ENCODE measurements at regions of chr11 and their contacts with region 1.

Region 1: GRCh38 chr11:69101115-69101791 is 52.5 kb downstream of the TPCN2 start:
- DNase-seq: peak; percentile 20
- ATAC-seq: peak; percentile 92
- H3K4me3 ChIP-seq: no peak overlapping the region
- H3K27ac ChIP-seq: no peak overlapping the region
- H3K4me1 ChIP-seq: no peaks in the 10 kb centered on the region; the same call in 1 of the 2 replicates
- H3K27me3 ChIP-seq: no peaks in the 10 kb centered on the region
- CTCF ChIP-seq: peak; percentile 96 to 100 (median 99)
- EP300 ChIP-seq: no peak
- POLR2A ChIP-seq: no peak
- RAD21 ChIP-seq: peak; percentile 98

Region 2: DNA sequence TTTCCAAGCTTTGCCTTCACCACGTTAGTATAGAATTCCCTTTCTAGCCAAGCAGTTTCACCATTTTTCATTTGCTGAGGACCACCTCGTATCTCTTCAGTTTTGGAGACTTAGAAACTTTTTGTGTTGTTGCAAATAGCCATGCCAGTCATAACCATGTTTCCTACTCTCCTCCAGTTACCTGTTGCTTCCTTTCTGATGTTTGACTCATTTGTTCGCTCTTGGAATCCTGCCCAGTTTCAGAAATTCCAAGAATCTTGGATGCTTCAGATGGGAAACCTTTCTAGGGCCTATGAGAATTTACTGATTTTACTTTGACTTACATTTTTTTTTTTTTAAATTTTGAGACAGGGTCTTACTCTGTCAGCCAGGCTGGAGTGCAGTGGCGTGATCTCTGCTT is 575.3 kb before region 1 on chr11:
- CTCF ChIA-PET with region 1: no interaction called
- POLR2A ChIA-PET with region 1: no interaction called
- RAD21 ChIA-PET with region 1: no interaction called
- SMC1A ChIA-PET with region 1: no interaction called
- in situ Hi-C with region 1: no loop called
- intact Hi-C with region 1: no loop called
- DNase-seq: no peak
- ATAC-seq: no peak
- H3K4me3 ChIP-seq: no peak overlapping the region
- H3K27ac ChIP-seq: no peak overlapping the region
- H3K4me1 ChIP-seq: no peaks in the 10 kb centered on the region; the same call in 1 of the 2 replicates
- H3K27me3 ChIP-seq: no peaks in the 10 kb centered on the region
- CTCF ChIP-seq: no peak
- EP300 ChIP-seq: no peak
- POLR2A ChIP-seq: no peak
- RAD21 ChIP-seq: no peak

Region 3: DNA sequence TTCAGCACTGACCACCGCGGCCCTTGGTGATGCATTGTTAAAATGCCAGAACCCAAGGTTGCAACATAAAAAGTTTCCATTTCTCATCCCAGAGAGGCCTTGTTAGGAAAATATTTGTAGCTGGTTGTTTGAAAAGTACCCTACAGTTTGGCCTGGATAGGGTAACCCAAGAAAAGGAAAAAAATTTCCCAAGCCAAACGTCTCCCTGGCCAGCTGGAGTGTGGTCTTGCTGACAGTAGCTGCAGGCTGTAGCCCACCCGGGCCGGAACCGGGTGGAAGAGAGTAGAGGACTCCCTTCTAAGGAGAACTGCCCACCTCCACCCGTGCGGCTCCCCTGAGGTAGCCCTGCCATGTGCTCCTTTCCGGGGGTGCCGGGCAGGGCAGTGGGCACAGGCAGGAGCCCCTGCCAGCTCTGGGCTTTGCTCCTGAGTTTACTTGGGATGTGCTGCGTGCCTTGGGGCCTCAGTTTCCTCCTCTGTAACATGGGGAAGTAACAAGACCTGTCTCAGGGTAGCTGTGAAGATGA is 159.1 kb before region 1 on chr11:
- CTCF ChIA-PET with region 1: no interaction called
- POLR2A ChIA-PET with region 1: no interaction called
- RAD21 ChIA-PET with region 1: no interaction called
- SMC1A ChIA-PET with region 1: no interaction called
- in situ Hi-C with region 1: no loop called
- intact Hi-C with region 1: no loop called
- DNase-seq: no peak
- ATAC-seq: no peak
- H3K4me3 ChIP-seq: no peak overlapping the region
- H3K27ac ChIP-seq: no peak overlapping the region
- H3K4me1 ChIP-seq: no peaks in the 10 kb centered on the region; the same call in 1 of the 2 replicates
- H3K27me3 ChIP-seq: no peaks in the 10 kb centered on the region
- CTCF ChIP-seq: no peak
- EP300 ChIP-seq: no peak
- POLR2A ChIP-seq: no peak
- RAD21 ChIP-seq: no peak

Region 4: GRCh38 chr11:69000831-69001242 is 100.4 kb before region 1 on chr11:
- CTCF ChIA-PET with region 1: no interaction called
- POLR2A ChIA-PET with region 1: no interaction called
- RAD21 ChIA-PET with region 1: no interaction called
- SMC1A ChIA-PET with region 1: no interaction called
- in situ Hi-C with region 1: no loop called
- intact Hi-C with region 1: no loop called
- DNase-seq: no peak
- ATAC-seq: no peak
- H3K4me3 ChIP-seq: no peak overlapping the region
- H3K27ac ChIP-seq: no peak overlapping the region
- H3K4me1 ChIP-seq: no peaks in the 10 kb centered on the region; the same call in 1 of the 2 replicates
- H3K27me3 ChIP-seq: peaks cover 0 to 3% of the 10 kb centered on the region in 2 experiments; a peak in 2 of 4 replicates
- CTCF ChIP-seq: 0 out of 6 replicates have a peak, but pooled peaks of 1 of the 3 experiments have one; percentile 12
- EP300 ChIP-seq: no peak
- POLR2A ChIP-seq: no peak
- RAD21 ChIP-seq: no peak

Region 5: GRCh38 chr11:69166218-69167115 is 65.2 kb after region 1 on chr11:
- CTCF ChIA-PET with region 1: no interaction called
- POLR2A ChIA-PET with region 1: no interaction called
- RAD21 ChIA-PET with region 1: interaction called, 5 read pairs
- SMC1A ChIA-PET with region 1: no interaction called
- in situ Hi-C with region 1: no loop called
- intact Hi-C with region 1: loop called (anchors 5 kb)
- DNase-seq: peak; percentile 75
- ATAC-seq: peak; percentile 95
- H3K4me3 ChIP-seq: peak overlapping the region; percentile 49; the same call in 1 of the 2 replicates
- H3K27ac ChIP-seq: peak overlapping the region; percentile 83
- H3K4me1 ChIP-seq: peaks cover 21% of the 10 kb centered on the region
- H3K27me3 ChIP-seq: no peaks in the 10 kb centered on the region
- CTCF ChIP-seq: no peak
- EP300 ChIP-seq: peak; percentile 79 to 88
- POLR2A ChIP-seq: peak; percentile 60
- RAD21 ChIP-seq: 0 out of 2 replicates have a peak, but pooled peaks have one; percentile 29

Region 6: GRCh38 chr11:69249311-69250185 is 148.3 kb after region 1 on chr11:
- CTCF ChIA-PET with region 1: no interaction called
- POLR2A ChIA-PET with region 1: no interaction called
- RAD21 ChIA-PET with region 1: no interaction called
- SMC1A ChIA-PET with region 1: interaction called, 3 read pairs
- in situ Hi-C with region 1: no loop called
- intact Hi-C with region 1: loop called (anchors 10 kb)
- DNase-seq: no peak
- ATAC-seq: no peak
- H3K4me3 ChIP-seq: no peak overlapping the region
- H3K27ac ChIP-seq: no peak overlapping the region
- H3K4me1 ChIP-seq: no peaks in the 10 kb centered on the region
- H3K27me3 ChIP-seq: no peaks in the 10 kb centered on the region
- CTCF ChIP-seq: no peak
- EP300 ChIP-seq: no peak
- POLR2A ChIP-seq: no peak
- RAD21 ChIP-seq: no peak

Region 7: DNA sequence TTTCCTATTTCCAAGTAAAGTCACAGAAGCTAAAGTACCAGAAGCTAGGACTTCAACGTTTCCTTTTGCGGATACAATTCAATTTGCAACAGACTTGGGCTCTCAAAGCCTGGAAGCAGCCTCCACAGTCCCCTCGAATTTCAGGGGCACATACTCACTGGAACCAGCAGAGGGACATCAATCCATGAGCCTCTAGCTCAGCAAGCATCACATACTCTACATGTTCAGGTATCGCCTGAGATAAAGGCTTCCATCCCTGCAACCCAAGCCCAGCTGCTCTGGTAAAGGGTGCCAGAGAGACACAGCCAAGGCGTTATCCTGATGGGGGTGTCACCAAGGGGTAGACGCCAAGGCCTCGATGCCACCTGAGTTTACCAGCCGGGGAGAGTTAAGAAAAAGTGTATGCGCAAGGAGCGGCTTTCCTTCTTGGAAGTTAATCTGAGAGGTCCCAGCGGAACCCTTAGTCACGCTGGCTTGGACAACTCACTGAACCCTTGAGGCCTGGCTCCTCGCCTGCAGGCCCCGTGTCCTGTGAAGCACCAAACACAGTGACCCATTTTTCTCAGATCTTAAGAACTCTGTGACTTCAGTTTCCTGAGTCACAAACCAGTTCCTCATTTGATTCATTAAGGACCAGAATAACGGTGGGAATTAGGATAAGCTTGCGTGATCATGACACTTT is 560.9 kb after region 1 on chr11:
- CTCF ChIA-PET with region 1: interaction called, 5 read pairs
- POLR2A ChIA-PET with region 1: no interaction called
- RAD21 ChIA-PET with region 1: interaction called, 3 read pairs
- SMC1A ChIA-PET with region 1: no interaction called
- in situ Hi-C with region 1: loop called (anchors 10 kb)
- intact Hi-C with region 1: no loop called
- DNase-seq: no peak
- ATAC-seq: no peak
- H3K4me3 ChIP-seq: no peak overlapping the region
- H3K27ac ChIP-seq: no peak overlapping the region
- H3K4me1 ChIP-seq: no peaks in the 10 kb centered on the region
- H3K27me3 ChIP-seq: no peaks in the 10 kb centered on the region
- CTCF ChIP-seq: peak in 1 of 3 experiments; percentile 15; a peak in 2 of 6 replicates
- EP300 ChIP-seq: no peak
- POLR2A ChIP-seq: no peak
- RAD21 ChIP-seq: no peak

Region 8: DNA sequence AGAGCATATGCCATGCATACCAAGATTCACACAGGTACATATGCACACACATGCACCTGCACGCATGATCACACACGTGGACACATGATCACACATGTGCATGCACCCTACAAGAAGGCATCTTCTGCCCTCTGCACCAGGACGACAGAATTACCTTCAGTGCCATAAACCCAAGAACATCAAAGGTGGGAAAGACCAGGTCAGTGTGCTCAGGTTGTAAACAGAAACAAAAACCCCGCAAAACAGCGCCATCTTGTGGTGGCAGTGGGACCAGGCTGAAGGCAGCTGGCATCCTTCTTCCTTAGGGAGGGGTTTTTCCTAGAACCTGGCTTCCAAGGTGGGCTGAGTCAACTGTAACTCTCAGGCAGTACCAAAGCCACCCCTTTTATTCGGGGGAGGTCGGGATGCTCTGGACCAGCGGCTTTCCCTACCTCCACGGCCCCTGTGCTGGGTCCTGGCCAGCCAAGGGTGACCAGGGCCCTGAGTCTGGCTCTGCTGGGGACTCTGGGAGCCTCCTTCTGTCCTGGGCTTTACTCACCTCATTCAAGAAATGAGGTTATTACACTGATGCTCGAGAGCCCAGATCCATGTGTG is 787.3 kb after region 1 on chr11:
- CTCF ChIA-PET with region 1: no interaction called
- POLR2A ChIA-PET with region 1: no interaction called
- RAD21 ChIA-PET with region 1: no interaction called
- SMC1A ChIA-PET with region 1: no interaction called
- in situ Hi-C with region 1: loop called (anchors 5 kb)
- intact Hi-C with region 1: no loop called
- DNase-seq: no peak
- ATAC-seq: peak; percentile 89
- H3K4me3 ChIP-seq: no peak overlapping the region
- H3K27ac ChIP-seq: no peak overlapping the region
- H3K4me1 ChIP-seq: no peaks in the 10 kb centered on the region
- H3K27me3 ChIP-seq: no peaks in the 10 kb centered on the region; a peak in 1 of 4 replicates
- CTCF ChIP-seq: peak; percentile 77 to 89 (median 89)
- EP300 ChIP-seq: no peak
- POLR2A ChIP-seq: no peak
- RAD21 ChIP-seq: peak; percentile 51

Measured in GM12878 (cell line).